Caco-2 (cell line): ENCODE measurements at regions of chr3 and their contacts with region 1.

Region 1: DNA sequence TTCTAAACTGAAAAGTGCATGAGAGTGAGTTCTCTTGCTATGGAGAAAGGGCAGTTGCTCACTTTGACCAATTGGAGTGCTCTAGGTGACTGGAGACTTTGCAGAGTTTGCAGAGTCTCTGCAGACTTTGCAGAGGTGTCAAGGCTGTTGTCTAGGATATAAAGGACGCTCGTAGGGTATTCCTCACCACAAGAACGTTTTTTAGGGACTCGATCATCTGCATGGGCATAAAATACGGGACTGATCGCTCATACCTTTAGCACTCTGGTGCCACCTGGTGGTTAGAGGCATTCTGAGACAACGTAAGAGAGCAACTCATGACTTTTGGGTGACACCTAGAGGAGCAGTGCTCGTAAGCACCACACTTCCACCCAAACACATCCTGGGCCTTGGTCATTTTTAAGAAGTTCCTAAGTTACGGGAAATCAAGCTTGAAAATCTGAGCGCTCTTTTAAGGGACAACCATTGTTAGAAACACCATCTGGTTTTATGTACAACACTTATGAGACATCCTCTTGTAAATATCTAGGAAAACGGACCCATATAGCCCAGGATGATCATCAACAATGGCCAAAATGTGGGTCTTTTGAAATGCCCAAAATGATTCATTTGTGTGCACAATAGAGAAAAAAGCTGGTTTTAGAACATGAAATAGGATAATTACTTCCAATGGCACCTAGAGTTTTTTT is 51.6 kb upstream of the XCR1 start:
- DNase-seq: peak; percentile 85 to 88
- H3K4me3 ChIP-seq: no peak overlapping the region
- H3K4me3 Mint-ChIP-seq: peak overlapping the region; percentile 60
- H3K27ac Mint-ChIP-seq: no peak overlapping the region
- H3K4me1 ChIP-seq: no peaks in the 10 kb centered on the region
- H3K4me1 Mint-ChIP-seq: no peaks in the 10 kb centered on the region
- H3K27me3 ChIP-seq: no peaks in the 10 kb centered on the region
- H3K27me3 Mint-ChIP-seq: no peaks in the 10 kb centered on the region
- CTCF ChIP-seq: peak; percentile 96

Region 2: DNA sequence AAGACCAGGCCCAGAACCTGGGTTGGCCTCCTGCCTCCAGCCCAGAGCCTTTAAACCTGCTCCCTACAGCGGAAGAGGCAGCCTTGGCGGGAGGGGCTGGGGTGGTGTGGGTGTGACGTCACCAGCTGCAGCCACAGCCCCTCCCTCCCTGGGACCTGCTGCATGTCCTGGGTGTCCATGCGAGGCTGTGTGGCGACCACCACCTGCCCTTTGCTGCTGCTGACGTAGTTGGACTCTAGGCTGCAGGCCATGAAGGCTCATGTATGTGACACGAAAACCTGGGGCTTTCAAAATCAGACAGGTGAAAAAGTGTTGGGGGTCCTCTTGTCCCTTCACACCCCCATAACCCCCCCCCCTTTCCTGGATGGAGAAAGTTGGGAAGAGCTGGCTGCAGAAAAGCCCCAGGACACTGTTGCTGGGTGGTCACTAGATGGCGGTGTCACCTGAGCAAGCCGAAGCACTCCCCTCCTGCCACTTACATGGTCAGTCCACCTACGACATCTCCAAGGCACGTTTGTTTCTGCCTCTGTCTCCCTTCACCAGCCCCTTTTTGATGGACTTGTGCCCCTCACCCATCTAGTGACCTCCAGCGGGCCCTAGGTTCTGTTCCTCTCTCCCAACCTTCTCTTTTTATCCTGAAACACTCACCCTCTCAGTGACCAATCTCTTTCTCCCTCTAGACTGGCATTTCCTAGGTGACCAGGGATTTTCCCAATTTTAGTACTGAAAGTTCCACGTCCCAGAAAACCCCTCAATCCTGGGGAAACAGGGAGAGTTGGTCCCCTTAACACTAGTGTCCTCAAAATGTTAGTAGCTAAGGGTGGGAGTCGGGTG is 317.8 kb before region 1 on chr3:
- CTCF ChIA-PET with region 1: no interaction called
- POLR2A ChIA-PET with region 1: no interaction called
- intact Hi-C with region 1: loop called (anchors 5 kb)
- DNase-seq: peak; percentile 64 to 66
- H3K4me3 ChIP-seq: no peak overlapping the region
- H3K4me3 Mint-ChIP-seq: no peak overlapping the region
- H3K27ac Mint-ChIP-seq: peak overlapping the region; percentile 60
- H3K4me1 ChIP-seq: peaks cover 13% of the 10 kb centered on the region
- H3K4me1 Mint-ChIP-seq: peaks cover 17% of the 10 kb centered on the region
- H3K27me3 ChIP-seq: no peaks in the 10 kb centered on the region
- H3K27me3 Mint-ChIP-seq: no peaks in the 10 kb centered on the region
- CTCF ChIP-seq: peak; percentile 67 to 80

Region 3: DNA sequence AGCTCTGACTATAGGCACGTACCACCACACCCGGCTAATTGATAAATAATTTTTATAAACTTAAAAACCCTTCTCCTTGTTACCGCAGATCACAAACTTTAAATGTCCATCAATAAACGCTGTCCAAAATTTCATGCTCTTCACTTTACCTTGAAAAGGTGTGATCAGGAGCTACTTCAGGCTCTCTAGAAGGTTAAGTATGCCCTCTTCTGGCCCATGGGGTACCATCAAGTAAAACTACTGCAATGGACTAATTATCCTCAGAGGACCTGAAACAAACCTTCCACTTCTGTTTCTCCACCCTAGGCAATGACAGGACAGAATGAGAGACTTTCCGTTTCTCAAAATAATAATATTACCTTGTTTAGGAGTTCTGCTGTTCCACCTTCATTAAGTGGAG is 246.2 kb before region 1 on chr3:
- CTCF ChIA-PET with region 1: no interaction called
- POLR2A ChIA-PET with region 1: no interaction called
- intact Hi-C with region 1: loop called (anchors 10 kb)
- DNase-seq: peak; percentile 40 to 48
- H3K4me3 ChIP-seq: no peak overlapping the region
- H3K4me3 Mint-ChIP-seq: no peak overlapping the region
- H3K27ac Mint-ChIP-seq: no peak overlapping the region
- H3K4me1 ChIP-seq: no peaks in the 10 kb centered on the region
- H3K4me1 Mint-ChIP-seq: no peaks in the 10 kb centered on the region
- H3K27me3 ChIP-seq: no peaks in the 10 kb centered on the region
- H3K27me3 Mint-ChIP-seq: no peaks in the 10 kb centered on the region
- CTCF ChIP-seq: peak; percentile 42 to 71

Region 4: GRCh38 chr3:45938864-45939263 is 140.0 kb before region 1 on chr3:
- CTCF ChIA-PET with region 1: interaction called, 8 read pairs
- POLR2A ChIA-PET with region 1: no interaction called
- intact Hi-C with region 1: loop called (anchors 1 kb)
- DNase-seq: peak; percentile 78
- H3K4me3 ChIP-seq: no peak overlapping the region
- H3K4me3 Mint-ChIP-seq: no peak overlapping the region
- H3K27ac Mint-ChIP-seq: no peak overlapping the region
- H3K4me1 ChIP-seq: no peaks in the 10 kb centered on the region
- H3K4me1 Mint-ChIP-seq: peaks cover 14% of the 10 kb centered on the region
- H3K27me3 ChIP-seq: no peaks in the 10 kb centered on the region
- H3K27me3 Mint-ChIP-seq: no peaks in the 10 kb centered on the region
- CTCF ChIP-seq: peak; percentile 71 to 88

Region 5: GRCh38 chr3:45995236-45996192 is 83.3 kb before region 1 on chr3 and contains the start of gene FYCO1:
- CTCF ChIA-PET with region 1: no interaction called
- POLR2A ChIA-PET with region 1: no interaction called
- intact Hi-C with region 1: loop called (anchors 2 kb)
- DNase-seq: peak; percentile 93
- H3K4me3 ChIP-seq: peak within 1 kb of the TSS; percentile 87
- H3K4me3 Mint-ChIP-seq: peak within 1 kb of the TSS; percentile 80
- H3K27ac Mint-ChIP-seq: peak within 1 kb of the TSS; percentile 83
- H3K4me1 ChIP-seq: 0 out of 2 replicates have a peak, but pooled peaks cover 5% of the 10 kb centered on the region
- H3K4me1 Mint-ChIP-seq: peaks cover 7% of the 10 kb centered on the region
- H3K27me3 ChIP-seq: no peaks in the 10 kb centered on the region
- H3K27me3 Mint-ChIP-seq: peaks cover 5% of the 10 kb centered on the region
- CTCF ChIP-seq: no peak
- total RNA-seq, gene FYCO1: 10.8 and 10.9 TPM in 2 replicates

Region 6: GRCh38 chr3:46038916-46039315 is 39.9 kb before region 1 on chr3:
- CTCF ChIA-PET with region 1: no interaction called
- POLR2A ChIA-PET with region 1: no interaction called
- intact Hi-C with region 1: no loop called
- DNase-seq: no peak
- H3K4me3 ChIP-seq: no peak overlapping the region
- H3K4me3 Mint-ChIP-seq: no peak overlapping the region
- H3K27ac Mint-ChIP-seq: no peak overlapping the region
- H3K4me1 ChIP-seq: no peaks in the 10 kb centered on the region
- H3K4me1 Mint-ChIP-seq: no peaks in the 10 kb centered on the region
- H3K27me3 ChIP-seq: no peaks in the 10 kb centered on the region
- H3K27me3 Mint-ChIP-seq: no peaks in the 10 kb centered on the region
- CTCF ChIP-seq: no peak